A673 (cell line): ENCODE measurements at regions of chr14 and their contacts with region 1.

Region 1: GRCh38 chr14:24241829-24242443 is 487 bp downstream of the TINF2 start:
- DNase-seq: peak; percentile 96
- H3K4me3 ChIP-seq: peak overlapping the region; percentile 57
- H3K27ac ChIP-seq: peak overlapping the region; percentile 95
- H3K4me1 ChIP-seq: peaks cover 10% of the 10 kb centered on the region
- H3K27me3 ChIP-seq: no peaks in the 10 kb centered on the region
- CTCF ChIP-seq: peak; percentile 47

Region 2: DNA sequence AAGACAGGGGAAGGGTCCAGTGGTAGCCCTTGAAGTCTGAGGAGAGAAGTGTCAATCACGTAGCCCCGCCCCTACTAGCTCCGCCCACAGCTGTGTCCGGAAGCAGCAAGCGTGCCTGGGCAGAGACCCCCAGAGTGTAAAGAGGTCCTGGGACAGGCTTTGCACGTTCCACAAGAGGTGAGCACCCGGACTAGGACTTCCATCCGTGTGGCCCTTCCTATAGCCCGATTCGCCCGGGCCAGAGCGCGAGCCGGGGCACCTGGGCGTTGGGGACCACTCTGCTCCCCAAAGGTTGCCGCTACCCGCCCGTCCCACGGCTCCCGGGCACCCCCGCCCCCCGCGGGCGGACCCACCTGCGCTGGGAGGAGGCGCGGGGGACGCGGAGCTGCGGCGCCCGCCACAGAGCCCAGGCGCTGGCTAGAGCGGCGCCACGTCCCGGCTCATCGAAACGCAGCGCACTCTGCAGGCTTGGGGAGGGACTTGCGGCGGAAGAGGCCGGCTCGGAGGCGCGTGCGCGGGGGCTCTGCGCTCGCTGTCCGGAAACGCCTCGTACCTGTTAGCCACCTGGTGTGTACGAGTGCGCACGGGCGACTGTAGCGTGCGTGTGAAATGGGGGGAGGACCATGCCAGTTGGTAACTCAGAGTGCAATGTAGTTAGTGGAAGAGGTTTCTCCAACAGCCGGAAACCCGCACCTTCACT is 29.3 kb after region 1 on chr14 and contains the start of gene RABGGTA:
- CTCF ChIA-PET with region 1: interaction called, 5 read pairs
- POLR2A ChIA-PET with region 1: no interaction called
- intact Hi-C with region 1: loop called (anchors 2 kb)
- DNase-seq: peak; percentile 94
- H3K4me3 ChIP-seq: peak within 1 kb of the TSS; percentile 84
- H3K27ac ChIP-seq: peak within 1 kb of the TSS; percentile 98
- H3K4me1 ChIP-seq: peaks cover 4% of the 10 kb centered on the region
- H3K27me3 ChIP-seq: no peaks in the 10 kb centered on the region
- CTCF ChIP-seq: peak; percentile 77
- total RNA-seq, gene RABGGTA: 22.2 and 23.8 TPM in 2 replicates

Region 3: GRCh38 chr14:24299255-24300195 is 57.6 kb after region 1 on chr14 and contains the starts of genes DHRS1 and NOP9:
- CTCF ChIA-PET with region 1: interaction called, 36 read pairs
- POLR2A ChIA-PET with region 1: no interaction called
- intact Hi-C with region 1: loop called (anchors 1 kb)
- DNase-seq: peak; percentile 90
- H3K4me3 ChIP-seq: peak within 1 kb of the TSS; percentile 92
- H3K27ac ChIP-seq: peak within 1 kb of the TSS; percentile 82
- H3K4me1 ChIP-seq: no peaks in the 10 kb centered on the region
- H3K27me3 ChIP-seq: no peaks in the 10 kb centered on the region
- CTCF ChIP-seq: no peak
- total RNA-seq, gene DHRS1: 13.3 and 14.5 TPM in 2 replicates
- total RNA-seq, gene NOP9: 34.0 and 37.1 TPM in 2 replicates

Region 4: DNA sequence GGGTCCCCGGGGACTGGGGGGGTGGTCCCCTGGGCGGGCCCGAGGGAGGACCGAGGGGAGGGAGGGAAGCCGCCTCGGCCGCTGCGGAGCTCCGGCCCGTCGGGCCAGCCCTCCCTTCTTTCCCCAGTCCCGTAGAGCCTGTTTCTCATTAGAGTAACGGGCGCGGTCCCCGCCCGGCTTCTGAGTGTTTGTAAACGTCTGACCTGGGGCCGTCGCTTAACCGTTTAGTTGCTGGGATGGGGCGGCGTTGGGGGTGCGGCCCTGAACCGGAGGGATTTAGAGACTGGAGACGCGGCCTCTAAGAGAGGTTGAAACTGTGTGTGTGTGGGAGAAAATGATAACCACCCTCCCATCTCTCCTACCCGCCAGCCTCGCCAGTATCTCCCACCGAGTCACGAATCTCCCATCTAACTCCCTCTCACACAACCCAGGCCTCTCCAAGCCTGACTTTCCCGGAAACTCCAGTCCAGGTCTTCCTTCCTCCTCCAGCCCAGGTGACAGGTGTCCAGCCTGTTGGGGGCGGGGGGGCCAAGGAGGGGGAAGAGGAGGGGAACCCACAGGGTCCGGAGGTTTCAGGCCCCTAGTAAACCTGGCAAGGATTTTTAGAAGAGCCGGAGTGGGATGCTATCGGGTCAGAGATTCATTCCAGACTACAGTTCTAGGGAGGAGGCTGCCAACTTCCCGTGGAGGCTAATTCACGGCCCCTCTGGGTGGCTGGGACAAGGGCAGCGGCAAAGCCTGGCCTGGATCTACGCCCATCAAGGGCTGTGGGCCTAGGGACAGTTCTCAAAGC is 125.0 kb after region 1 on chr14:
- CTCF ChIA-PET with region 1: no interaction called
- POLR2A ChIA-PET with region 1: no interaction called
- intact Hi-C with region 1: no loop called
- DNase-seq: peak; percentile 96
- H3K4me3 ChIP-seq: peak overlapping the region; percentile 95
- H3K27ac ChIP-seq: peak overlapping the region; percentile 91
- H3K4me1 ChIP-seq: peaks cover 12% of the 10 kb centered on the region
- H3K27me3 ChIP-seq: no peaks in the 10 kb centered on the region
- CTCF ChIP-seq: no peak